Caco-2 (cell line): ENCODE measurements at regions of chr12 and their contacts with region 1.

Region 1: GRCh38 chr12:24561882-24562760 is 386.8 kb downstream of the BCAT1 start:
- DNase-seq: peak; percentile 74 to 82
- H3K4me3 ChIP-seq: peak overlapping the region; percentile 84
- H3K4me3 Mint-ChIP-seq: peak overlapping the region; percentile 94
- H3K27ac Mint-ChIP-seq: peak overlapping the region; percentile 73
- H3K4me1 ChIP-seq: peaks cover 41% of the 10 kb centered on the region; the same call in 1 of the 2 replicates
- H3K4me1 Mint-ChIP-seq: peaks cover 30% of the 10 kb centered on the region
- H3K27me3 ChIP-seq: no peaks in the 10 kb centered on the region
- H3K27me3 Mint-ChIP-seq: no peaks in the 10 kb centered on the region
- CTCF ChIP-seq: no peak

Region 2: DNA sequence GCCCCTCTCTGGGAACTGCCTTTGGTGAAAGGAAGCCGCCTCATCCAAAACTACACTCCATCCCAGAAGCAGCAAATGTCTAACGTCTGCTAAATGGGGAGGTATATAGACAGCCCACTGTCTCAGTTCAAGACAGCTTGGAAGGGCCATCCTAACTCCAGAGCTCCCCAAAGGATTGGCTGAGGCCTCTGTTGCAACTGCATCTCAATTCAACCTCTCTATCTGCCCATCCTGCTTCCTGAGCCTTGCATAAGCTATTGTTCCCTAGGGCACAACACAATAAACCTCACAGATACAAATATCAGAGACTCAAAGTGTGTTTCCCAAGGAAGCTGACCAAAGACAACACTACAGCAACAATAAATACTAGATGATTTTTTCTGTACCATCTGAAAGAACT is 117.5 kb before region 1 on chr12:
- CTCF ChIA-PET with region 1: no interaction called
- POLR2A ChIA-PET with region 1: no interaction called
- intact Hi-C with region 1: no loop called
- DNase-seq: no peak
- H3K4me3 ChIP-seq: no peak overlapping the region
- H3K4me3 Mint-ChIP-seq: no peak overlapping the region
- H3K27ac Mint-ChIP-seq: no peak overlapping the region
- H3K4me1 ChIP-seq: no peaks in the 10 kb centered on the region
- H3K4me1 Mint-ChIP-seq: peaks cover 13% of the 10 kb centered on the region
- H3K27me3 ChIP-seq: no peaks in the 10 kb centered on the region
- H3K27me3 Mint-ChIP-seq: no peaks in the 10 kb centered on the region
- CTCF ChIP-seq: no peak

Region 3: GRCh38 chr12:24499151-24500146 is 62.7 kb before region 1 on chr12:
- CTCF ChIA-PET with region 1: no interaction called
- POLR2A ChIA-PET with region 1: no interaction called
- intact Hi-C with region 1: loop called (anchors 2 kb)
- DNase-seq: peak in 1 of 2 experiments; percentile 50
- H3K4me3 ChIP-seq: no peak overlapping the region
- H3K4me3 Mint-ChIP-seq: peak overlapping the region; percentile 5
- H3K27ac Mint-ChIP-seq: peak overlapping the region; percentile 19
- H3K4me1 ChIP-seq: peaks cover 21% of the 10 kb centered on the region
- H3K4me1 Mint-ChIP-seq: peaks cover 19% of the 10 kb centered on the region
- H3K27me3 ChIP-seq: no peaks in the 10 kb centered on the region
- H3K27me3 Mint-ChIP-seq: no peaks in the 10 kb centered on the region
- CTCF ChIP-seq: no peak

Region 4: GRCh38 chr12:24608637-24609285 is 46.6 kb after region 1 on chr12:
- CTCF ChIA-PET with region 1: no interaction called
- POLR2A ChIA-PET with region 1: interaction called, 13 read pairs
- intact Hi-C with region 1: no loop called
- DNase-seq: no peak
- H3K4me3 ChIP-seq: no peak overlapping the region
- H3K4me3 Mint-ChIP-seq: no peak overlapping the region
- H3K27ac Mint-ChIP-seq: no peak overlapping the region
- H3K4me1 ChIP-seq: 0 out of 2 replicates have a peak, but pooled peaks cover 7% of the 10 kb centered on the region
- H3K4me1 Mint-ChIP-seq: no peaks in the 10 kb centered on the region
- H3K27me3 ChIP-seq: no peaks in the 10 kb centered on the region
- H3K27me3 Mint-ChIP-seq: no peaks in the 10 kb centered on the region
- CTCF ChIP-seq: no peak

Region 5: GRCh38 chr12:24617471-24617870 is 55.4 kb after region 1 on chr12:
- CTCF ChIA-PET with region 1: no interaction called
- POLR2A ChIA-PET with region 1: no interaction called
- intact Hi-C with region 1: loop called (anchors 2 kb)
- DNase-seq: no peak
- H3K4me3 ChIP-seq: no peak overlapping the region
- H3K4me3 Mint-ChIP-seq: peak overlapping the region; percentile 65
- H3K27ac Mint-ChIP-seq: peak overlapping the region; percentile 87
- H3K4me1 ChIP-seq: peaks cover 27% of the 10 kb centered on the region
- H3K4me1 Mint-ChIP-seq: peaks cover 31% of the 10 kb centered on the region
- H3K27me3 ChIP-seq: no peaks in the 10 kb centered on the region
- H3K27me3 Mint-ChIP-seq: no peaks in the 10 kb centered on the region
- CTCF ChIP-seq: no peak